Posterior vena cava (tissue), 2 donors: ENCODE measurements at regions of chr15 and their contacts with region 1.

Region 1: DNA sequence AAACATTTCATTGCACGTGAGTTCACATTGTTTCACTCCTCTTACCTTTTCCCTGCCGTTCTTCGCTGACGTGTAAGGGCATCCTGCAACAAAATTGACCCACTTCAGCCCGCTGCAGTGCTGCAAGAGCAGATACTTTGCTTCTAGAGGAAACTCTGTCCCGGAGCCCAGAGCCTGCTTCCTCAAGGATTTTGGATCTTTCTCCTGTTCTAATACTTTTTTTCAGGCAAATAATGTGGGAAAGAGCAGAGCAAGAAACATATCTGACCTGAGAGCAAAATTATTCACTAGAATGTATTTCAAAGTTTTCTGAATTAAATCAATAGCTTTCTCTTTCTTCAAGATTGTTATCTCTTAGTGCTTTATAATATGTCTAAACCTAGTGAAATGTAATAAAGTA is 303.9 kb downstream of the AGBL1 start:
- DNase-seq: no peak

Region 2: DNA sequence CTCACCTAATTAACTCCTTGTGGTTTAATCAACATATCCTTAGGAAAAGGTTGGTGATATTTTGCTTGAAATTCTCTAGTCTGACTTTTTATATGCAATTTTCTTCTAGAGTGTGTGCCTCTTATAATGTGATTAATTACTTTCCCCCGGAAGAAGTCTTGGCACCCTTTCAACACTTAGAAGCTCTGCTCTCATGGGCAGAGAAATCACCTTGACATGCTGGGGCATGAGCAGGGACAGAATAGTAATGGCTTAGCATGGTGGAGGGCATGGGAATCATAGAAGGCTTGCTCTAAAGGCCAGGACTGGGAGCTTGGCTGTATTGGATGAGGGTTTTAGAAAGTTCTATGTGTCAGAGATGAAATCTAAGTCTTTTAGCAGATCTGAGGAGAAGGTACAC is 10.5 kb before region 1 on chr15:
- intact Hi-C with region 1: no loop called
- DNase-seq: no peak

Region 3: DNA sequence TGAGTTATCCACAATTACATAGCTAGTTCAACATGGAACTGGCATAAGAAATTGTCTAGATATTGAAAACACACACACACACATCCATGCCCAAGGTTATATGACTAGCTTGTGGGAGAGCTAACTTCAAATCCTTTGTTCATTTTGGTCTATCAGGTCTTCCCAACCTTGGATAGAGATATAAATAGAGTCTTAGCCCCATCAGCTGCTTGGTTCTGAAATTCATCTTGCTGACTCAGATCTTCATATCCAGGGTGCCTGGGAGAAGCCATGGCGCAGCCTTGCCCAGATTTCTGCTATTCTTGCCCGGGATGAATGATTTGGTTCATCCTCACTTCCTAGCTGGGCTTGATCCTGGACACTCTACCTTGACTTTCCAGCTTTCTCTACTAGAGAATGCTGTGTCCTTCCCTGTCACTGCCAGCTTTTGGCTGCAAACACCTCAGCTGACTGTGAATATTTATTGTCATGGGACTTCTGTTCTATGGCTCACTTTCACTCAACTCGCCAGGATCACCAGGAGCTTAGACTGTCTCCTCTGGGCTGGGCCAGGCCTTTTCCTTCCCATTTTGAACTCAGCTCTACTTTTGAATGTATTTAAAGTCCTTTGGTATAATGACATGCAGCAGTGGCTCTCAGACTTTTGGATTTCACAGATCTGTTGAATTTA is 20.4 kb after region 1 on chr15:
- intact Hi-C with region 1: loop called in 1 of 2 experiments (anchors 1 kb)
- DNase-seq: no peak